ENCODE measurements at regions of chr7 and their contacts with region 1.

Region 1: GRCh38 chr7:155009570-155010157 is 6.7 kb upstream of the PAXIP1 start:
- DNase-seq: peak; percentile 22
- H3K4me3 ChIP-seq: no peak overlapping the region
- H3K27ac ChIP-seq: no peak overlapping the region
- H3K4me1 ChIP-seq: no peaks in the 10 kb centered on the region
- H3K27me3 ChIP-seq: peaks cover 0 to 2% of the 10 kb centered on the region in 2 experiments
- CTCF ChIP-seq: peak; percentile 29 to 49
- POLR2A ChIP-seq: no peak

Region 2: GRCh38 chr7:154892462-154892861 is 117.2 kb before region 1 on chr7:
- CTCF ChIA-PET with region 1: no interaction called
- POLR2A ChIA-PET with region 1: no interaction called
- dilution Hi-C with region 1: no loop called
- intact Hi-C with region 1: no loop called
- DNase-seq: no peak
- H3K4me3 ChIP-seq: no peak overlapping the region
- H3K27ac ChIP-seq: no peak overlapping the region
- H3K4me1 ChIP-seq: no peaks in the 10 kb centered on the region
- H3K27me3 ChIP-seq: no peaks in the 10 kb centered on the region
- CTCF ChIP-seq: no peak
- POLR2A ChIP-seq: no peak

Region 3: GRCh38 chr7:155020996-155021395 is 11.3 kb after region 1 on chr7:
- CTCF ChIA-PET with region 1: interaction called, 11 read pairs
- POLR2A ChIA-PET with region 1: no interaction called
- dilution Hi-C with region 1: no loop called
- intact Hi-C with region 1: no loop called
- DNase-seq: no peak
- H3K4me3 ChIP-seq: no peak overlapping the region
- H3K27ac ChIP-seq: no peak overlapping the region
- H3K4me1 ChIP-seq: no peaks in the 10 kb centered on the region
- H3K27me3 ChIP-seq: no peaks in the 10 kb centered on the region
- CTCF ChIP-seq: no peak
- POLR2A ChIP-seq: no peak